ENCODE measurements at regions of chr5 and their contacts with region 1.

Region 1: DNA sequence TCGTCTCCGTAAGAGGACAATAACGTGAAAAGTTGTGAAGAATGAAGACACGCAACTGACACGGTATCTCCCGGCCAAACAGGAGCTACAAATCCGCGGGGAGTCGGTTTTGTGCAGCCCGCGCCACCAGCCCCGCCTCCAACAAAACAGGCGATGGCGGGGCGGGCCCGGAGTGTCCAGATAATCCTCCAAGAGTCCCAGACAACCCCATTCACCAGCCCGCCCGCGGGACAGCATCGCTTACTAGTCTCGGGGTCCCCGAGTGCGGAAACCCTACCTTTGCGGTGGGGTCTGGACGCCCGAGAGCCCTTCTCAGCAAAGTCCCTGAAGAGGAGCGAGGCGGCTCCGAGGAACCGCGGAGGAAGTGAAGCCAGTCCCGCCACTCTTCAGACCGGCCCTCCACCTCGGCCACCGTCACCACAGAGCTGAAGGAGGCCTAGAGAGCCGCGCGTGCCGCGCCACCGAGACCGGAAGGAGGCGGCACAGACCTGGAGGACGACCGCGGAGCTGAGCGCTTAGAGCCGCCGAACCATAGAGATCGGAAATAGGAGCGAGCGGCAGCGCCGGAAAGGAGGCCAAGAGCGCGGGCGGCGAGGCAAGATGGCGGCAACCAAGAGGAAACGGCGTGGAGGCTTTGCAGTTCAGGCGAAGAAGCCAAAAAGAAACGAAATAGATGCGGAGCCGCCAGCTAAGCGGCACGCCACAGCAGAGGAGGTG is at the starts of genes BRIX1 and RAD1:
- DNase-seq: peak; percentile 98
- ATAC-seq: peak; percentile 98
- H3K4me3 Mint-ChIP-seq: no peak within 1 kb of the TSS
- H3K27ac Mint-ChIP-seq: peak within 1 kb of the TSS; percentile 60
- H3K4me1 Mint-ChIP-seq: peaks cover 37% of the 10 kb centered on the region
- H3K27me3 Mint-ChIP-seq: no peaks in the 10 kb centered on the region
- total RNA-seq, gene BRIX1: 81.2 to 104 TPM
- total RNA-seq, gene RAD1: 38.7 to 43.0 TPM

Region 2: GRCh38 chr5:34656001-34656699 is 259.1 kb before region 1 on chr5 and contains the start of gene RAI14:
- CTCF ChIA-PET with region 1: no interaction called
- POLR2A ChIA-PET with region 1: no interaction called
- intact Hi-C with region 1: loop called in 1 of 2 experiments (anchors 5 kb)
- DNase-seq: peak; percentile 37
- ATAC-seq: peak; percentile 30
- H3K4me3 Mint-ChIP-seq: peak within 1 kb of the TSS; percentile 83
- H3K27ac Mint-ChIP-seq: peak within 1 kb of the TSS; percentile 85
- H3K4me1 Mint-ChIP-seq: peaks cover 16% of the 10 kb centered on the region
- H3K27me3 Mint-ChIP-seq: peaks cover 32% of the 10 kb centered on the region
- total RNA-seq, gene RAI14: 4.5 to 7.1 TPM

Region 3: DNA sequence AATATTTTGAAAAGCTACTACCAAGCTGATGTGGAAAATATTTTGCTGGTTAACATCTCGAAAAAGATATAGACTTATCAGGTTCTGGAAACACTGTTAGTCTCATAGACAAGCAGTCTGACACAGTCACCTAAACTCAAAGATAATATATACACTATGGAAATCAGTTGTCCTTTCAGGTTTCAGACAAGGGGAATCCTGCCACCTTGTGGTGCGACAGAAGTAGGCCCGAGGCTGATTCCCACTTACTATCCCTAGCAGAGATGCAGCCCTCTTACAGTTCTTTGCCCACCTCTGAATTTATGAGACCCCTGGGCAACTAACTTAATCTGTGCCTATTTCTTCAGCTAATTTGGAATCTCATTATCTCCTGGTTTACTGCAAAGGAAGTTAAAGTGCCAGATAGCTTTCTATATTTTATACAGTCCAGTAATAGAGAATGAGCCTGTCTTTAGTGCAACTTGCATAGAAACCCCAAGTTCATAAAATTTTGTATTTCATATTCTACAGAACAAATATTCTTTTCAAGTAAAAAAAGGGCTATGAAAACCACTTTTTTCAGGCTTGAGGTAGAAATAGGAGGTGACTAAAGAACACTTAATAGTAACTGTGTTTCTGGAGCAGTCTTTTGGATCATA is 16.9 kb before region 1 on chr5:
- CTCF ChIA-PET with region 1: interaction called, 10 read pairs
- POLR2A ChIA-PET with region 1: interaction called, 4 read pairs
- intact Hi-C with region 1: no loop called
- DNase-seq: peak; percentile 77
- ATAC-seq: peak; percentile 86
- H3K4me3 Mint-ChIP-seq: no peak overlapping the region
- H3K27ac Mint-ChIP-seq: no peak overlapping the region
- H3K4me1 Mint-ChIP-seq: no peaks in the 10 kb centered on the region
- H3K27me3 Mint-ChIP-seq: no peaks in the 10 kb centered on the region

Region 4: DNA sequence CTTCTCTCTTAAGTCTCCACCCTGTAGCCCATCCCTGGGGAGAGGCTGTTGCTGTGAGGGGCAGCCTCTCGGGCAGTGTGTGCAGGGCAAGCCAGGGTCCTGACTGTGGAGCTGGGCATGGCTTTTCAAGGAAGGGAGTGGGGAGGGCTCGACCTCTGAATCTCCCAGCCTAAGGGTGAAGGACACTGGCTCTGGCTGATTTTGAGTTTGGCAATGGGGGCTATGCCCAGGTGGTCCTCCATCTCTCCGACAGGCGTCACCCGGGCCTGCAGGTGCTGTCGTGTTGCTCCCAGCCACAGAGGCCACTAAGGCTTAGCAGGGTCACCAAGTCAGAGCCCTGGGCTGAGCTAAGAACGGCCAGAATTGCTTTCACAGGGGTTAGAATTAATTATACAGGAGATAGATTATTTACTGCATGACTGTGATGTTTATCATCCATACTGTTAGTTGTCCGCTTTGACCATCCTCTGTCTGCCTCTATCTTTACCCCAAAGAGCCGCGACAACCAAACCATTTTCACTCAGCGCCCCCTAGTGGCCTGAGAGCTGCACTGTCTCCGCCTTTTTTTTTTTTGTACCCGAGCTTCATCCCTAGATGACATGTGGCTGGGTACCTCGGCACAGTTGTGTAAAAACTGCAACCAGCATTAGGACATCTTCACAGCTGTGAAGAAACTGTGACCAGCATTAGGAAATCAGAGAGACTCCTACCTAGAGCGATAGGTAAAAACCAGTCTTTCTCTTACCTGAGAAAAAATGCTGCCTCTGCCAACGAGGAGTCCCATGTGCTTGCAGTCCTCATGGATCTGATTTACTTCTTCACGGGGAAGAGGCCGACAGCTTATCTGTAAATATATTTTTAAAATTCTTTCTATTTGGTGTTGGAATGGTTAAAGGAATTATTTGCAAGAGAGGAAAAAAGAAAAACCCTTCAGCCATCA is 88.0 kb after region 1 on chr5:
- CTCF ChIA-PET with region 1: interaction called, 3 read pairs
- POLR2A ChIA-PET with region 1: no interaction called
- intact Hi-C with region 1: loop called in 1 of 2 experiments (anchors 1 kb)
- DNase-seq: peak; percentile 79
- ATAC-seq: peak; percentile 72
- H3K4me3 Mint-ChIP-seq: no peak overlapping the region
- H3K27ac Mint-ChIP-seq: no peak overlapping the region
- H3K4me1 Mint-ChIP-seq: no peaks in the 10 kb centered on the region
- H3K27me3 Mint-ChIP-seq: peaks cover 20% of the 10 kb centered on the region

Region 5: GRCh38 chr5:35182541-35183535 is 267.5 kb after region 1 on chr5:
- CTCF ChIA-PET with region 1: no interaction called
- POLR2A ChIA-PET with region 1: no interaction called
- intact Hi-C with region 1: no loop called
- DNase-seq: peak; percentile 67
- ATAC-seq: peak; percentile 70
- H3K4me3 Mint-ChIP-seq: no peak overlapping the region
- H3K27ac Mint-ChIP-seq: no peak overlapping the region
- H3K4me1 Mint-ChIP-seq: no peaks in the 10 kb centered on the region
- H3K27me3 Mint-ChIP-seq: peaks cover 9% of the 10 kb centered on the region

Measured in activated CD4-positive, alpha-beta T cell treated with anti-CD3 and anti-CD28 coated beads for 36 hours (primary cell).